ENCODE measurements at regions of chr2 and their contacts with region 1.

Region 1: DNA sequence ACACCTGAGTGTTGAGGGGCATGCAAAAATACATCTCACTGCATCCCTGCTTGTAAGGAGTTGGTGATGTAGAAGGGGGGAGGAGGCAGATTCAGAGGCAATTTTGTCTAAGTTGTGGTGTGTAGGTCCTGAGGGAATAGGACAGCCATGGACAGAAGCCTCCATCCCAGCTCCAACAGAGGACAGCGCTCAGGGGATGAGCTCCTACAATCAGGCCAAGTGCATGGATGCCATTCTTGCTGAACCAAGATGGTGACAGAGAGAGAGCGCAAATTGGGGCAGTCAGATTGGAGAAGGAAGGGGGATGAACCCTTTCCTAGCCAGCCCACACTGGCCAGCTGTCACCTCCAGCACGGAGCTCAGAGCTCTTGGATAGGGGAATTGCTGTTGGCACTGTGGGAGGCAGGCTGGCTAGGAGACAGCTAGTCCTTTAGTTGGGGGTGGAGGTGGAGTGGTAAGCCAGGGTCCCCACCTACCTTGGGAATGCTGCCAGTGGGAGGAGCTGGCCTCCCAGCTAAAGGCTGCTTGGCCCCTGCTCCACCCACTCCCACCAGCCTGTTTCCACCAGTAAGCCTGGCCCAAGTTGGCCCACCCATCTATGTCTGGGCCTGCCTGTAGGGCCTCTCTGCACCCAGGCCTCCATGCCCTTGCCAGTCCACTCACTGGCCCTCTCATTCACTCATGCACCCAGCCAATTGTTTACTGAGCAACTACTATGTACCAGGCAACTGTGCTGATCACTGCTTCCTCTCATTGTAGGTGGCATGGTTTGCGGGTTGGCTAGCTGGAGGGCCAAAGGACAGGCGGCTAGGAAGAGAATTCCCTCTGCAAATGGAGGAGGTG is 2.5 kb upstream of the PER2 start:
- DNase-seq: peak in 1 of 2 donors; percentile 48
- ATAC-seq: no peak
- H3K4me3 ChIP-seq: no peak overlapping the region
- H3K27ac ChIP-seq: no peak overlapping the region
- H3K4me1 ChIP-seq: peaks cover 7% of the 10 kb centered on the region
- H3K27me3 ChIP-seq: no peaks in the 10 kb centered on the region
- CTCF ChIP-seq: no peak

Region 2: DNA sequence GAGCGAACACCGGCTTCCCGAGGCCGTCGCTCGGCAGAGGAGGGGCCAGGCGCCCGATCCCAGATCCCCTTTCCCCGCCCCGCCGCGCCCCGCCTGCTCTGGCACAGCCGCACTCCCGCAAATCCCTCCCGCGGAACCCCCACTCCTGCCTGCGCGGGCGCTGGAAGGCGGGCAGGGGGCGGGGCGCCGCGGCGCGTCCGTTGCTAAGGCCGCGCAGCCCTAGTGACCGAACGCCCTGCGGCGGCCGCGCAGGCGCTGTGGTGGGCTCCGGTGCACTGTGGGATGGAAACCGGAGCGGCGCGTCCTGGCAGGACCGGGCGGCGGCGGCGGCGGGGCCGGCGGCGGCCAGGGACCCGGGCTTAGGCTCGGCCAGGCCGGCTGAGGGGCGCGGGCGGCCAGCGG is 29.3 kb after region 1 on chr2 and contains the start of gene TRAF3IP1:
- intact Hi-C with region 1: loop called in 1 of 2 experiments (anchors 1 kb)
- DNase-seq: peak; percentile 95 to 97
- ATAC-seq: peak; percentile 95 to 97 (median 96)
- H3K4me3 ChIP-seq: peak within 1 kb of the TSS; percentile 82
- H3K27ac ChIP-seq: peak within 1 kb of the TSS; percentile 86
- H3K4me1 ChIP-seq: peaks cover 33% of the 10 kb centered on the region
- H3K27me3 ChIP-seq: no peaks in the 10 kb centered on the region
- CTCF ChIP-seq: no peak
- total RNA-seq, gene TRAF3IP1: 14.9 to 24.7 (median 18.4) TPM